Activated CD4-positive, alpha-beta memory T cell treated with anti-CD3 and anti-CD28 coated beads for 36 hours (primary cell): ENCODE measurements at regions of chr1 and their contacts with region 1.

Region 1: DNA sequence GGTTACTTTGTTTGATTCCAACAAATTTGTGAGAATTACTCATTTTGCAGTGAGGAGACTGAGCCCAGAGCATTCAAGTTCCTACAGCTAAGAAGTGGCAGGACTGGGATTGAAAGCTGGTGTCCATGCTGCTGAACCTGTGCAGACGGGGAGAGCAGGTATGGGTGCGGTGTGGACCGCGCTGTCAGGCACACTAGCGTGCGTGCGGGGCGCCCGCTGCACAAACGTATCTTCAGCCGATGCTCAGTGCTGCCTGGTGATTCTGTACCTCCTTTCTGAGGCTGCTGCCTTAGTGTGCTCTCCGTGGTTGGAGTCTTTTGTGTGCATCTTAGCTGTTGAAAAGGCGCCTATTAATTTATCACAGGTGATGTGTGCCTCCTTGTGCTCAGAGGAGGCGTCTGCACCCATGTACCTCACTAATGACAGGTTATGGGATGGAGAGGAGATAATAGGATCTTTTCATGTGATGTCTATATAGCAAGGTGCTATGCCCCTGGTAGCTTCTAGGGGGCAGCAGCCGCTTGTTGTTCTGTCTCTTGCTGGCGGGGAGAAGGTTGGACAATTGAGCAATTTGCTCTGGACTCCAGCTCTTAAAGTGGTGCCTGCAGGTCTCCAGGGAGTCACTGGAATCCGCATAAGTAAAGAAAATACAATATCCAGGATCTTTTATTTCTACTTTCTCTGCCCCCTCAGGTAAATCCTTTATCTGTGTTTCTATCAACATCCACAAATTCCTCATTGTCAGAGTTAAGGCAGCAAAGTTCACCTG is 32.5 kb downstream of the PEX14 start:
- DNase-seq: peak; percentile 67
- H3K4me3 Mint-ChIP-seq: no peak overlapping the region
- H3K27ac Mint-ChIP-seq: no peak overlapping the region
- H3K4me1 Mint-ChIP-seq: peaks cover 39% of the 10 kb centered on the region
- H3K27me3 Mint-ChIP-seq: no peaks in the 10 kb centered on the region

Region 2: DNA sequence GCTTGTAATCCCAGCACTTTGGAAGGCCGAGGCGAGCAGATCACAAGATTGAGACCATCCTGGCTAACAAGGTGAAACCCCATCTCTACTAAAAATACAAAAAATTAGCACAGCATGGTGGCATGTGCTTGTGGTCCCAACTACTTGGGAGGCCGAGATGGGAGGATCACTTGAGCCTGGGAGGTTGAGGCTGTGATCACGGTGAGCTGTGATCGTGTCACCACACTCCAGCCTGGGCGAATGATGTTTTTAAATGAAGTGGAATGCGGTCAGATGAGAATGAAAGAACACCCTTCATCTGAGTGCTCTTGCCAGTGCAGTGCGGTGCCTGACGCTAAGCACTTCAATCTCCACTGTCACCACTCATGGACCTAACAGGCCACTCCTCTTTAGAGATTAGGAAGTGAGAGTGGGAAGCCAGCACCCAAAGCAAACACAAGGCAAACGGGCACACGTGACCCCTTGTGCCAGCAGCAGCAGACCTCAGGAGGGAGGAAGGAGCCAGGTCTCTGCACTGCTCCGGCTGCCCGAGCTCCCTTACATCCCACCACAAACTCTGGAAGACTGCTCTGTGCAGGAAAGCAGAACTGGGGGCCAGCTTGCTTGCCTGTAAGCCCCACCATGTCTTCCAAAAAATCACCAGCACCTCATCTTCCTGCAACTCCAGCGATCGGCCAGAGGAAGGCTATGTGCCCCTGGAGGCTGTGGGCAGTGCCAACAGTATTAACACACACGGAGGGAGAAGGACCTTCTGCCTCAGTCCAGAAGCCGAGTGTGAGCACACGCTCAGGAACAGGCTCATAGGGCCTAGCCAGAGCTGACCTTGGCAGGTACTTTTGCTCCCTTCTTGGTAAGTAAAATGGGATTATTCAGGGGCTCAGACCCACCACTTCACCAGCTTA is 606.9 kb before region 1 on chr1:
- CTCF ChIA-PET with region 1: no interaction called
- POLR2A ChIA-PET with region 1: interaction called, 3 read pairs
- intact Hi-C with region 1: loop called (anchors 5 kb)
- DNase-seq: no peak
- H3K4me3 Mint-ChIP-seq: no peak overlapping the region
- H3K27ac Mint-ChIP-seq: no peak overlapping the region
- H3K4me1 Mint-ChIP-seq: peaks cover 30% of the 10 kb centered on the region
- H3K27me3 Mint-ChIP-seq: no peaks in the 10 kb centered on the region

Region 3: GRCh38 chr1:10472220-10473144 is 34.8 kb before region 1 on chr1 and contains the start of gene DFFA:
- CTCF ChIA-PET with region 1: no interaction called
- POLR2A ChIA-PET with region 1: no interaction called
- intact Hi-C with region 1: loop called (anchors 2 kb)
- DNase-seq: peak; percentile 96
- H3K4me3 Mint-ChIP-seq: peak within 1 kb of the TSS; percentile 92
- H3K27ac Mint-ChIP-seq: peak within 1 kb of the TSS; percentile 82
- H3K4me1 Mint-ChIP-seq: peaks cover 31% of the 10 kb centered on the region
- H3K27me3 Mint-ChIP-seq: no peaks in the 10 kb centered on the region
- total RNA-seq, gene DFFA: 32.0 to 32.8 TPM

Region 4: GRCh38 chr1:10482810-10483209 is 24.5 kb before region 1 on chr1:
- CTCF ChIA-PET with region 1: no interaction called
- POLR2A ChIA-PET with region 1: no interaction called
- intact Hi-C with region 1: no loop called
- DNase-seq: no peak
- H3K4me3 Mint-ChIP-seq: no peak overlapping the region
- H3K27ac Mint-ChIP-seq: no peak overlapping the region
- H3K4me1 Mint-ChIP-seq: peaks cover 5% of the 10 kb centered on the region
- H3K27me3 Mint-ChIP-seq: no peaks in the 10 kb centered on the region

Region 5: GRCh38 chr1:10522322-10522860 is 15.1 kb after region 1 on chr1:
- CTCF ChIA-PET with region 1: interaction called, 33 read pairs
- POLR2A ChIA-PET with region 1: interaction called, 12 read pairs
- intact Hi-C with region 1: no loop called
- DNase-seq: no peak
- H3K4me3 Mint-ChIP-seq: no peak overlapping the region
- H3K27ac Mint-ChIP-seq: no peak overlapping the region
- H3K4me1 Mint-ChIP-seq: peaks cover 35% of the 10 kb centered on the region
- H3K27me3 Mint-ChIP-seq: no peaks in the 10 kb centered on the region

Region 6: DNA sequence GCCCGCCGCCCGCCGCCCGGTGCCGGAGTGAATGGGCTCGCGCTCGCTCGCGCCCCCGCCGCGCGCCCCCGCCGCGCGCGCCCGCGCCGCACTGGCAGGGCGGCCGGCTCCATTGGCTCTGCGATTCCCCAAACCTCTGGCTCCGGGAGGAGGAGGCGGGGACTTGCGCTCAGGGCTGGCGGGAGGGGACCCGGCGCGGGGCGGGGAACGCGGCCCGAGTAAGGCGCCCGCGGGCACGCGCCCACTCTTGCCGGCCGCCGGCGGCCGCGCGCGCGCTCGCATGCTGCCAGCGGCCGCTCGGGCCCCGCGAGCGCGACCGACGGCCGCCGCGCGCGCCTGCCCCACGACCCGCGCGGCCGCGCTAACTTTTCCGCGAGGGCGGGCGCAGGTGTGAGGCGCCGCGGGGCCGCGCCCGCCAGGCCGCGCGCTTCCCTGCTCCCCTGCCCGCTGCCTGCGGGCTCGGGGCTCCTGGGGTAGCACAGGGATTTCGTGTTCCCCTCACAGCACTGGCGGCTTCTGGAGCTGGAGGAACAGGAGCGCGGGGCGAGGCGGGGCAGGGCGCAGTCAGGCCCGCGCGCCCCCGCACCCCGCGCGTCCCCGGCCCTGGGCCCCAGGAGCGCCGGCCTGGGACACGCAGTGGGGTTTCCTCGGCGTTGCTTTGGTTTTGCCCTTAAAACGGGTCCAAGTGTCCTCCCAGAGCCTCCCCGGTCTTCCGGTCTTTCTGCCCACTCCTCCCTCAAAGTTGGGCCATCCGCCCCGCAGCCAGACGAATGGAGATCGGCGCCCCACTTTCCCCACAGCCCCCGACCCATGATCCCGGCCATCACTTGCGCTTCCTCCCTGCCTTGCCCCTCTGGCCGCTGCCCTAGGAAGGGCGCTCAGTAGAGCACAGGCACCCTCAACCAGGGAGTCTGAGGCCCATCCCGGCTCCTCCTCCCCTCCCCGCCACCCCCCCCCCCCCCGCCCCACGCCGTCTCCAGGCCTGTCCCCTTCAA is 187.6 kb after region 1 on chr1:
- CTCF ChIA-PET with region 1: interaction called, 26 read pairs
- POLR2A ChIA-PET with region 1: no interaction called
- intact Hi-C with region 1: loop called (anchors 1 kb)
- DNase-seq: peak; percentile 83
- H3K4me3 Mint-ChIP-seq: peak overlapping the region; percentile 69
- H3K27ac Mint-ChIP-seq: no peak overlapping the region
- H3K4me1 Mint-ChIP-seq: peaks cover 31% of the 10 kb centered on the region
- H3K27me3 Mint-ChIP-seq: no peaks in the 10 kb centered on the region

Region 7: GRCh38 chr1:10779201-10779600 is 271.9 kb after region 1 on chr1:
- CTCF ChIA-PET with region 1: no interaction called
- POLR2A ChIA-PET with region 1: no interaction called
- intact Hi-C with region 1: no loop called
- DNase-seq: no peak
- H3K4me3 Mint-ChIP-seq: no peak overlapping the region
- H3K27ac Mint-ChIP-seq: no peak overlapping the region
- H3K4me1 Mint-ChIP-seq: no peaks in the 10 kb centered on the region
- H3K27me3 Mint-ChIP-seq: no peaks in the 10 kb centered on the region

Region 8: DNA sequence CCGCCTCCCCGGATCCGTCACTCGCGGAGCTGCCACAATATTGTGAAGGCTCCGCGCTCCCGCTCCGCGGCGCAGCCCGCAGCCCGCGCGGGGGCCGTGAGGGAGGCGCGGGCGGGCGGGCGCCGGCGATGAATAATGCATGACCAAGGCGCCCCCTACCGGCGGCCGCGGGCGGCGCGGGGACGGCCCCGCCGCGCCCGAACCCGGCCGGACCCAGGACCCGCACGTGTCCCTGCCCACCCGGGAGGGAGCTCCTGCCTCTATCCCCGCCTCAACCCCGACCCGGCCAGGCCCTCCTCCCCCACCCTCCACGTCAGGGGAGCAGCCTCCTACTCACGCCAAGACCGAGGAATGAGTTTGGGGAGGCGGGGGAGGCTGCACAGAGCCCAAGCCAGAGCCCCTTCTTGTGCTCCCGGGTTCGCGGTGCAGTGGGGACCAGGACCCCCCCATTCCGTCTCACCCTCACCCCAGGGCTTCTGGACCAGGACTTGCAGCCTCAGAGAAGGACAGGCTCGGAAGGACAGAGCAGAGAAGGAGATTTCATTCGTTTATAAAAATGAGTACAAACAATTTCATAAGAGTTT is 359.9 kb after region 1 on chr1:
- CTCF ChIA-PET with region 1: interaction called, 15 read pairs
- POLR2A ChIA-PET with region 1: no interaction called
- intact Hi-C with region 1: loop called (anchors 1 kb)
- DNase-seq: peak; percentile 60
- H3K4me3 Mint-ChIP-seq: no peak overlapping the region
- H3K27ac Mint-ChIP-seq: no peak overlapping the region
- H3K4me1 Mint-ChIP-seq: peaks cover 10% of the 10 kb centered on the region
- H3K27me3 Mint-ChIP-seq: peaks cover 60% of the 10 kb centered on the region

Region 9: GRCh38 chr1:10932088-10932487 is 424.8 kb after region 1 on chr1:
- CTCF ChIA-PET with region 1: interaction called, 5 read pairs
- POLR2A ChIA-PET with region 1: no interaction called
- intact Hi-C with region 1: loop called (anchors 2 kb)
- DNase-seq: peak; percentile 73
- H3K4me3 Mint-ChIP-seq: no peak overlapping the region
- H3K27ac Mint-ChIP-seq: no peak overlapping the region
- H3K4me1 Mint-ChIP-seq: peaks cover 9% of the 10 kb centered on the region
- H3K27me3 Mint-ChIP-seq: peaks cover 3% of the 10 kb centered on the region